Activated naive CD4-positive, alpha-beta T cell treated with anti-CD3 and anti-CD28 coated beads for 36 hours (primary cell): ENCODE measurements at regions of chr9 and their contacts with region 1.

Region 1: DNA sequence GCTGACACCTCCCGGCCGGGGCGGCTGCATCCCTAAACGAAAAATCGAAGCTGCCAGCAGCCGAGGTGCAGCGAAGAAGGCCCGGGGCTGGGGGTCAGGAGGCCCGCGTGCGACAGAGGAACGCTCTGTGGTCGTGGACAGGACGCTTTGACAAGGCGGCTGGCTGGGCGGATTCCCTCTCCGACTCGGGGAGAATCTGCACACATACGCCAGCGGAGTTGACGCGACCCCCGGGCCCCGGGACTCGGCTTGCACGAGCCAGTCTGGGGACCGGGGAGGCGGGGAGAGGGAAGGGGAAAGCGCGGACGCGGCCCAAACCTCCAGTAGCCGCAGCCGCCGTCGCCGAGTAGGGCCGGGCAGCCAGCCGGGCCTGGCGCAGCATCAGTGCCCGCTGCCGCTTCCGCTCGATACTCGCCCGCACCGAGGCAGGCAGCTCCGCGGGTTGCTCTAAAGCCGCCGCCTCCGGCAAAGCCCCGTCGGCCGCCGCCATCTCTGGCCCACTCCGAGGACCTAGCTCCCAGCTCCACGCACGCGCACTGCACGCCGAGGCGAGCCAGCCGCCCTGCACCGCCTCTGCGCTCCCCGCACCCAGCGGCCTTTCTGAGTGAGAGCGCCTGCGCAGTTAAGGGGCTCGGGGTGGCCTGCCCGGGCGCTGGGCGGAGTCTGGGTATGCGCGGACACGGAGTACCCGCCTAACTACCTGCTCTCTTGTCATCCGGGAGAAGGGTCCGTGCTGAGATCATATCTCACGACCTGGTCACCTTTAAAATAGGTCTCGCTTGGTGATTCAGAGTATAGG is at the start of gene XPA:
- DNase-seq: peak; percentile 97
- H3K4me3 Mint-ChIP-seq: peak within 1 kb of the TSS; percentile 88
- H3K27ac Mint-ChIP-seq: peak within 1 kb of the TSS; percentile 92
- H3K4me1 Mint-ChIP-seq: peaks cover 55% of the 10 kb centered on the region
- H3K27me3 Mint-ChIP-seq: no peaks in the 10 kb centered on the region
- total RNA-seq, gene XPA: 5.8 to 6.0 TPM

Region 2: GRCh38 chr9:97237311-97237786 is 459.7 kb before region 1 on chr9:
- CTCF ChIA-PET with region 1: no interaction called
- intact Hi-C with region 1: no loop called
- DNase-seq: no peak
- H3K4me3 Mint-ChIP-seq: peak overlapping the region; percentile 88
- H3K27ac Mint-ChIP-seq: no peak overlapping the region
- H3K4me1 Mint-ChIP-seq: peaks cover 14% of the 10 kb centered on the region
- H3K27me3 Mint-ChIP-seq: no peaks in the 10 kb centered on the region

Region 3: GRCh38 chr9:97666907-97667686 is 29.9 kb before region 1 on chr9:
- CTCF ChIA-PET with region 1: no interaction called
- intact Hi-C with region 1: loop called (anchors 1 kb)
- DNase-seq: peak; percentile 8
- H3K4me3 Mint-ChIP-seq: no peak overlapping the region
- H3K27ac Mint-ChIP-seq: peak overlapping the region; percentile 73
- H3K4me1 Mint-ChIP-seq: peaks cover 39% of the 10 kb centered on the region
- H3K27me3 Mint-ChIP-seq: no peaks in the 10 kb centered on the region

Region 4: GRCh38 chr9:97675655-97676054 is 21.3 kb before region 1 on chr9:
- CTCF ChIA-PET with region 1: interaction called, 3 read pairs
- intact Hi-C with region 1: loop called (anchors 2 kb)
- DNase-seq: no peak
- H3K4me3 Mint-ChIP-seq: no peak overlapping the region
- H3K27ac Mint-ChIP-seq: peak overlapping the region; percentile 3
- H3K4me1 Mint-ChIP-seq: peaks cover 10% of the 10 kb centered on the region
- H3K27me3 Mint-ChIP-seq: no peaks in the 10 kb centered on the region